Spleen (tissue), 13 donors: ENCODE measurements at regions of chr15 and their contacts with region 1.

Region 1: GRCh38 chr15:74768771-74769342 is 13.0 kb upstream of the CSK start:
- DNase-seq: peak; percentile 90
- H3K4me3 ChIP-seq: no peak overlapping the region
- H3K27ac ChIP-seq: no peak overlapping the region
- H3K4me1 ChIP-seq: peaks cover 16 to 45% (median 36%) of the 10 kb centered on the region in 6 donors
- H3K27me3 ChIP-seq: peaks cover 0 to 12% (median 0%) of the 10 kb centered on the region in 7 donors
- CTCF ChIP-seq: peak; percentile 74 to 90 (median 85)
- POLR2A ChIP-seq: no peak

Region 2: DNA sequence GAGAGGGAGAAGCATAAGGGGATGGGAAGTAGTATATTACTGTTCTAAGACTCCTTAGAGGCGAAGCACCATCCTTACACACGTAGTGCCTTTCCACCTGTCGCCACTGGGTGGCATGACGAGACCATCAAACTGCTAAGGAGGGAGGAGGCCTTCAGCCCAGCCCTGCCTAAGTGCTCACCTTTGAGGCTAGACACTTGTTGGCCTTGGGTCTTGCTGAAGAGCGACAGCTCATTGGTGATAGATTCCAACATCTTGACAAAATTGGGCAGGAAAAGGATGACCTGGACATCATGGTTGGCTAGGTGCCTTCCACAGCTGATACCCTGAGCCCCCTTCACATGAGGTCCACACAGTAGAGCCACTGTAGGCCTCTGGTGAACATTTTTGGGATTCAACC is 133.6 kb before region 1 on chr15:
- intact Hi-C with region 1: loop called (anchors 2 kb)
- DNase-seq: peak; percentile 90
- H3K4me3 ChIP-seq: no peak overlapping the region
- H3K27ac ChIP-seq: no peak overlapping the region
- H3K4me1 ChIP-seq: peaks cover 0 to 34% (median 8%) of the 10 kb centered on the region in 6 donors
- H3K27me3 ChIP-seq: no peaks in the 10 kb centered on the region
- CTCF ChIP-seq: peak; percentile 79 to 96 (median 91)
- POLR2A ChIP-seq: no peak

Region 3: DNA sequence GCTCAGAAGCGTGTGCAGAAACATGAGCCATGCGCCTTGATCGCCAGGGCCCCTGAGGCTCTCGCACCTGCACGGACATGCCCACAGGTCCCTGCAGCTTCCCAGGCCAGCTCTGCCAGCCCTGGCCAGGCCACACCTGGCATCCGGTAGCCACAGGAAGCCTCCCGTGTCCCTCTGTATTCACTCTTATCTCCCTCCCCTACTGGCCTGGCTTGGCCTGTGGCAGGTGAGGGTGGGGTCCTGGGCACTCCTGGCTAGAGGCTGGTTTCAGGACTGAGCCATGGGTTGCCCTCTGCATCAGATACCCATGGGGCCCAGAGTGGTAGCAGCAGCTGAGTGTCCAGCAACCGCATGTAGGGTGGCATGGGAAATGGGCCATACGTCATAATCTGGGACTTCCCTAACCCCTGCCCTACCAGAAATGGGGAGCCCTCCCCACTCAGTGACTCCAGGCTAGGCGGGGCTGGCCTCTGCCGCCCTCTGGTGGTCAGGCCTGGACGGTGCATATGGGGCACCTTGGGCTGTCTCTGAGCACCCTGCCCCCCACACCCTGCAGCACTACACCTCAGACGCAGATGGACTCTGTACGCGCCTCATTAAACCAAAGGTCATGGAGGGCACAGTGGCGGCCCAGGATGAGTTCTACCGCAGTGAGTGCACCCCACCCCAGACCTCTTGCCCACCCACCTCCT is 31.1 kb after region 1 on chr15:
- intact Hi-C with region 1: loop called (anchors 5 kb)
- DNase-seq: peak; percentile 97
- H3K4me3 ChIP-seq: peak overlapping the region in 1 of 8 donors; percentile 44
- H3K27ac ChIP-seq: peak overlapping the region; percentile 48 to 99 (median 89)
- H3K4me1 ChIP-seq: peaks cover 54 to 65% (median 61%) of the 10 kb centered on the region in 6 donors
- H3K27me3 ChIP-seq: no peaks in the 10 kb centered on the region
- CTCF ChIP-seq: peak; percentile 98 to 99 (median 99)
- POLR2A ChIP-seq: no peak

Region 4: GRCh38 chr15:74950078-74951000 is 181.5 kb after region 1 on chr15:
- intact Hi-C with region 1: loop called (anchors 5 kb)
- DNase-seq: peak; percentile 79
- H3K4me3 ChIP-seq: no peak overlapping the region
- H3K27ac ChIP-seq: no peak overlapping the region
- H3K4me1 ChIP-seq: peaks cover 3 to 27% (median 17%) of the 10 kb centered on the region in 6 donors
- H3K27me3 ChIP-seq: peaks cover 0 to 10% (median 0%) of the 10 kb centered on the region in 7 donors
- CTCF ChIP-seq: peak; percentile 90 to 99 (median 94)
- POLR2A ChIP-seq: no peak